ENCODE measurements at regions of chr1 and their contacts with region 1.

Region 1: DNA sequence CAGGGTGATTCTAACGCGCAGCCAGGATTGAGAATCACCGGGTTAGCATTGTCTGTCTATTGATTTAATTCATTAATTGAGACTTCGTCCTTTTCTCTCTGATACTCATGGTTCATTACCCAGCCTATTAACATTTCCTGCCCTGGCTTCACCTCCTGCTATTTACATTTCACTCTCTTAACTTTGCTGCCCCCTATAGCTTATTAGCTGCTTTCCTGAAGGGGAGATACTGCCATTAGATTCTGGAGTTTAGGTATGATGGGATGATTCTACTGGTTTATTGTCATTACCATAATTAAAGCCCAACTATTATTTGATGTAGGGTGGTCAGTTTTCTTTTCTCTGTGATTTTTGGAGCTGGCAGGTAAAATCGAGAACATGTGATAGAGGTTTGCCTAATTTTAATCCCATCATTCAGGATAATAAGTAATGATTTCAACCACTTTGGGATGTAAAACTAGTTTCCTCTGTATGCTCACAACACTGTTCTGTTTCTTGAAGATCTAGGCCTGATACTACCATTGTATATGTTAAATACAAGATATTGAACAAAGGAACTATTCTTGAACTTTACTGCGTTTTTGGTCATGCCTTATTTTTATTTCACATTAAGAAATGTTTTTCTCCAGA is 6.4 kb downstream of the PPP2R5A start:
- DNase-seq: no peak
- H3K4me3 ChIP-seq: peak overlapping the region in 2 of 8 donors; percentile 36 to 85
- H3K27ac ChIP-seq: peak overlapping the region in 5 of 8 donors; percentile 21 to 100 (median 40)
- H3K4me1 ChIP-seq: peaks cover 46 to 100% (median 98%) of the 10 kb centered on the region in 6 donors
- H3K27me3 ChIP-seq: no peaks in the 10 kb centered on the region
- CTCF ChIP-seq: peak; percentile 60 to 82 (median 73)
- POLR2A ChIP-seq: no peak

Region 2: GRCh38 chr1:211680752-211681327 is 610.8 kb before region 1 on chr1:
- intact Hi-C with region 1: loop called (anchors 5 kb)
- DNase-seq: peak; percentile 91
- H3K4me3 ChIP-seq: no peak overlapping the region
- H3K27ac ChIP-seq: peak overlapping the region in 7 of 8 donors; percentile 2 to 64 (median 37)
- H3K4me1 ChIP-seq: peaks cover 4 to 19% (median 14%) of the 10 kb centered on the region in 6 donors
- H3K27me3 ChIP-seq: no peaks in the 10 kb centered on the region
- CTCF ChIP-seq: peak; percentile 60 to 94 (median 77)
- POLR2A ChIP-seq: no peak

Region 3: DNA sequence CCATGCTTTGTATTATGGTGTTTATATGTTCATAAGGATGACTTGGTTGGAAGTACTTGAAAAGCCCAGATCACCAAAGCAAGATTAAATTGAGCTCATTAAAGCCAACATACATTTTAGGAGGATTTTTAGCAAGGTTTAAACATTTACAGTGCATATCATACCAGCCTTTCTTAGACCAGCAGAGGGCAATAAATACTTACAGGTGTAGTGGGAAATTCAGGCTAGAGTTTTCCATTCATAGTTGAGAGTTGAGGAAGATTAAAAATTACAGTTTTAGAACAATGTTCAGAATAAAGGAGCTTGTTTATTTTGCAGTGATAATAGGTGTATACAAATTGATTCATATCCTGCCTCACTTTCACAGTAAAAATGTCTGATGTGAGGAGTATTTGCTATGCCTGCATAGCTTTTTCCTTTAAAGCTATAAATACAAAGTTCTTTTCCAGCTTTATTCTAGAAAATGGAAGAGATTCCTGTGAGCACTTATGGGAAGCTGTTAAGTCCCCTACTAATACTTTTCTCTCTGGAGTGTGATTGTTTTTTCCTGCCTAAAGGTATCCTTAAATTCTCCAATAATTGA is 220.8 kb before region 1 on chr1:
- intact Hi-C with region 1: loop called (anchors 5 kb)
- DNase-seq: no peak
- H3K4me3 ChIP-seq: peak overlapping the region in 2 of 8 donors; percentile 9 to 32
- H3K27ac ChIP-seq: no peak overlapping the region
- H3K4me1 ChIP-seq: peaks cover 0 to 16% (median 0%) of the 10 kb centered on the region in 6 donors
- H3K27me3 ChIP-seq: no peaks in the 10 kb centered on the region
- CTCF ChIP-seq: peak; percentile 53 to 85 (median 76)
- POLR2A ChIP-seq: no peak

Region 4: DNA sequence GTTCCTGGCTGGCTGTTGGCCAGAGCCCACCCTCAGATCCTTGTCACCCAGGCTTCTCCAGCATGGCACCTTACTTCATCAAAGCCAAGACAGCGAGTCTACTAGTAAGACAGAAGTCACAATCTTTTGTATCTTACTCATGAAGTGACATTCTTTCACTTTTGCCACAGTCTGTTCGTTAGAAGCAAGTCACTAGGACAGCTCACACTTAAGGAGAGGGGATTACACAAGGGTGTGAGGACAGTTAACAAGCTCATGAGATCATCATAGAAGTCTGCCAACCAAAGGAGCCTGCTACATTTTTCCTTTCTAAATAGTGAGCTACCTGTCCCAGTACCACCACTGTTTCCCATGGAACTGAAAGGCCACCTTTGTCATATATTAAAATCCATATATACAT is 61.6 kb after region 1 on chr1:
- intact Hi-C with region 1: loop called (anchors 10 kb)
- DNase-seq: no peak
- H3K4me3 ChIP-seq: no peak overlapping the region
- H3K27ac ChIP-seq: no peak overlapping the region
- H3K4me1 ChIP-seq: no peaks in the 10 kb centered on the region
- H3K27me3 ChIP-seq: no peaks in the 10 kb centered on the region
- CTCF ChIP-seq: no peak
- POLR2A ChIP-seq: no peak

Measured in spleen (tissue), 13 donors.